Activated naive CD4-positive, alpha-beta T cell treated with anti-CD3 and anti-CD28 coated beads for 36 hours (primary cell): ENCODE measurements at regions of chr5 and their contacts with region 1.

Region 1: DNA sequence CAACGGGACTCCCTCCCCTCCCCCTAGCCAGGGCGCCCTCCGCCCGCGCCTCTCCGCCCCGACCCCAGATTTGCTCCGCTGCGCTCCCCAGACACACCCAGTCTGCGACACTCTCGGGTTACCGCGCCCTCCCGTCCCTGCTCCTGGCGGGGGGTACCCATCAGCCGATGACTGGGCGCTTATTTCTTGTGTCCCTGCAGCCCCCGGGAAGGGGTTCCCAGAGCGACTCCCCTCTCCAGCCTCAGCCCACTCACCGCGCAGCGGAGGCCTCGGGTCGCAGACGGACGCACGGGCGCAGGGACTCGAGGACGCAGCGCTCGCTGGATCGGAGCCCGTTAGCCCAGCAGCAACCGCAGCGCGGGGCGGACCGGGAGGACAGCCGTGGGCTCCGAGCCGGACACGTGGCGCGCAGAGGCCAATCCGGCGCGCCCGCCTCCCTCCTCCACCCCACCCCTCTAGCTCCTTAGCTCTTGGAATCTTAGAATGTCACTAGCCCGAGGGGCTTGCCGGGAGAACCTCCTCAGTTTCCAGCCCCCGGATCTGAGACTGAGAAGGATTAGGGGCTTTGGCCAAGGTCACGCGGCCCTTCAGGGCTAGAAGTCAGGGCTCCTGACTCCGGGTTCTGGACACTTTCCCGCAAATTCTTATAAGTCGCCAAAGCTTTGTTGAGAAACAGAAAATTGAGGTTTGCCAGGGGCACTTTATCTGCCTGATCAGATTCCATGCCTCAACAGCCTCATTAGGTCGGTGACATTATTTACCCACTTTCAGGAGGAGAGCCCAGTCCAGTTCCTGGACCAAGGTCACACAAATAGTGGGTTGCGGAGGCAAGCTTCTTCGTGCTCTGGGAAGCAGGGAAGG is at the start of gene ANXA6:
- DNase-seq: peak; percentile 71
- H3K4me3 Mint-ChIP-seq: peak within 1 kb of the TSS; percentile 92
- H3K27ac Mint-ChIP-seq: peak within 1 kb of the TSS; percentile 90
- H3K4me1 Mint-ChIP-seq: peaks cover 56% of the 10 kb centered on the region
- H3K27me3 Mint-ChIP-seq: no peaks in the 10 kb centered on the region
- total RNA-seq, gene ANXA6: 272 to 284 TPM

Region 2: DNA sequence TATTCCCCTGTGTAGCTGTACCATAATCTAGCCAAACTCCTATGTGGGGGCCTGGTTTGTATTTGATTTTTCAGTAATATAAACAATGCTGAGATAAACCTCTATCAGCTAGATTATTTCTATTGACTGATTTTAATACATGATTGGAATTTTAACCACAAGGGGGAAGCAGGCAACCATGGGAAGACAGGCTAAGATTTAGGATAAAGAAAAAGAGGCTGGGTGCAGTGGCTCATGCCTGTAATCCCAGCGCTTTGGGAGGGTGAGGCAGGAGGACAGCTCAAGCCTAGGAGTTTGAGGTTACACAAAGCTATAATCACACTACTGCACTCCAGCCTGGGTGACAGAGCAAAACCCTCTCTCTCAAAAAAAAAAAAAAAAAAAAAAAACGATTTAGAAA is 155.4 kb before region 1 on chr5:
- CTCF ChIA-PET with region 1: no interaction called
- intact Hi-C with region 1: no loop called
- DNase-seq: peak; percentile 29
- H3K4me3 Mint-ChIP-seq: no peak overlapping the region
- H3K27ac Mint-ChIP-seq: no peak overlapping the region
- H3K4me1 Mint-ChIP-seq: no peaks in the 10 kb centered on the region
- H3K27me3 Mint-ChIP-seq: no peaks in the 10 kb centered on the region

Region 3: DNA sequence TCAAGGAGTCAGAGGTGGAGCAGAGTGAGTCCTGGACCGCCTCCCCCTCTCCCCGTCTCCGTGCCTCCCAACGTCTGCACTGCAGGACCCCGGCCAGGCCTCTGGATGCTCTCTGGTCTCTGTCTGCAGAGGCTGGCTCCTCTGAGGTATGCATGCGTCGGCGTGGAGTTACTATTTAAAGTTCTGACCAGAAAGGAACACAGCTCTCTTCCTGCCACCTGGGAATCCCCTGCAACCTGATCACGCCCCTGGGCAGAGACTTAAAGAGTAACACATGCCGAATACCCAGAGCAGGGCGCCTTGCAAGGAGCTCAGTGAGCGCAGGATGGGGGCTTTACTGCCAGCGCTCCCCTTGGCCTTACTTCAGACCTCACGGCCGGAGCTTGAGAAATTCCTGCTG is 16.1 kb before region 1 on chr5:
- CTCF ChIA-PET with region 1: interaction called, 26 read pairs
- intact Hi-C with region 1: loop called (anchors 1 kb)
- DNase-seq: peak; percentile 88
- H3K4me3 Mint-ChIP-seq: peak overlapping the region; percentile 67
- H3K27ac Mint-ChIP-seq: peak overlapping the region; percentile 82
- H3K4me1 Mint-ChIP-seq: peaks cover 86% of the 10 kb centered on the region
- H3K27me3 Mint-ChIP-seq: no peaks in the 10 kb centered on the region

Region 4: GRCh38 chr5:151202381-151203139 is 44.9 kb after region 1 on chr5:
- CTCF ChIA-PET with region 1: no interaction called
- intact Hi-C with region 1: no loop called
- DNase-seq: peak; percentile 75
- H3K4me3 Mint-ChIP-seq: peak overlapping the region; percentile 39
- H3K27ac Mint-ChIP-seq: peak overlapping the region; percentile 84
- H3K4me1 Mint-ChIP-seq: peaks cover 33% of the 10 kb centered on the region
- H3K27me3 Mint-ChIP-seq: no peaks in the 10 kb centered on the region

Region 5: DNA sequence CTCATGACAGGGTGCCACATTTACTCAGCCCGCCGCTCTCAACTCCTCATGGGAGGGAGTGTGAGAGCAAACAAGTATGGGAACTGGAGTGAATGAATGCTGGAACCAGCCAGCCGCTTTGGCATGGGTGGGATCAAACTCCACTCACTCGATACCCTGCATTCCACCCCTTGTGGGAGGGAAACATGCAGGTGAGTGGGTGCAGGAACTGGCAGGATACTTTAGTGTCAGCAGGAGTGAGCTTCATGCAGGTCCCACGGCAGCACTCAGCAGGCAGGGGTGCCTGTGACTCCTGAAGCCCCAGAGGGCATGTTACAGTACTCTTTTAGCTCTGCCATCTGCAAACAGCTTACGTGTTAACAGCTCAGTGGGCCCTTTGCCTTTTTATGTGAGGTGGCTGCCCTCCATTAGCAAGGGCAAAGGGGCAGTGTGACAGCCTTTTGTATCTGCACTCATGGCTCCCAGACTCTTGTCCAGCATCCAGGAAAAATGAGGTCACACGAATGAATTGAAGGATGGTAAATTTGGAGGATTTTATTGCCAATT is 1680.7 kb after region 1 on chr5:
- CTCF ChIA-PET with region 1: no interaction called
- intact Hi-C with region 1: no loop called
- DNase-seq: no peak
- H3K4me3 Mint-ChIP-seq: no peak overlapping the region
- H3K27ac Mint-ChIP-seq: no peak overlapping the region
- H3K4me1 Mint-ChIP-seq: no peaks in the 10 kb centered on the region
- H3K27me3 Mint-ChIP-seq: no peaks in the 10 kb centered on the region